ENCODE measurements at regions of chr14 and their contacts with region 1.

Region 1: DNA sequence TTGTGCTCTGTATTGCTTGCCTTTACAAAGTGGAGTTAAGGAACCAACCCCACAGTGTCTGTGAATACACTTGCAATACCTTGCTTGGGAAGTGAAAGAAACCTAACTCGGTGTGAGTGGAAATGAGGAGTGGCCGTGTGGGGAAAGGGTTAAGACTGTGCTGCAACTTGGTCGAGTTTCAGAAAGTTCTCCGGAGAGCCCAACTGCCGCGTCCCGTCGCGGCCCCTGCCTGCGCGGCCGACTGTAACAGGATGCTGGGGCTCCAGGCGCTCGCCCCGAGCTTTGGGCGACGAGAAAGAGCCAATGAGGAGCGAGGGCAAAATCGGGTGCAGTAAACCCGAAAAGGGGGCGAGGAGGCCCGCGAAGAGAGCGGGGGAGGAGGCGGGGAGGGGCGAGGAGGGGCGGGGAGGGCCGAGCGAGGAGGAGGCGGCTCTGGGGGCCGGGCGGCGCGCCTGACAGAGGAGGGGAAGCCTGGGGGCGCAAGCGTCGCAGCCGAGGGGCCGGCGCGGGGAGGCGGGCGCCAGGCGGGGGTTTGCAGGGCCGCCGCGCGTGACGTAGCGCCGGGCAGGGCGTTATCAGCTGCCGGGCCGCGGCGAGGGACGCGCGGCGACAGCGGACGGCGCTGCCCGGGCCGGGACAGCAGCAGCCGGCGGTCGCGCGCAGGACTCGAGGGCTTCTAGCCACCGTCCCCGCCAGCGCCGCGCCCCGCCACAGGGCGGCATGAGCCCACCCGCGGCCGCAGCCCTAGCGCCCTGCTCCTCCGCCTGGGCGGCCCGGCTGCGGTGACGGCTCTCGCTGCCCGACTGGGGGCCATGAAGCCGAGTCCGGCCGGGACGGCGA is at the start of gene DACT1:
- DNase-seq: peak in 1 of 2 experiments; percentile 78
- H3K4me3 ChIP-seq: peak within 1 kb of the TSS; percentile 56 to 73 (median 64)
- H3K27ac ChIP-seq: no peak within 1 kb of the TSS
- H3K4me1 ChIP-seq: peaks cover 4 to 21% (median 13%) of the 10 kb centered on the region in 4 experiments
- H3K27me3 ChIP-seq: peaks cover 8 to 35% (median 22%) of the 10 kb centered on the region in 4 experiments; a peak in 6 of 7 replicates
- CTCF ChIP-seq: 0 out of 4 replicates have a peak, but pooled peaks of 1 of the 3 experiments have one; percentile 2
- EP300 ChIP-seq: no peak
- POLR2A ChIP-seq: no peak; a peak in 1 of 3 replicates
- RAD21 ChIP-seq: 0 out of 4 replicates have a peak, but pooled peaks of 1 of the 2 experiments have one; percentile 2
- total RNA-seq, gene DACT1: 26.2 and 29.8 TPM in 2 replicates

Region 2: GRCh38 chr14:58513272-58513671 is 124.3 kb before region 1 on chr14:
- CTCF ChIA-PET with region 1: interaction called, 10 read pairs
- POLR2A ChIA-PET with region 1: no interaction called
- DNase-seq: no peak
- H3K4me3 ChIP-seq: no peak overlapping the region
- H3K27ac ChIP-seq: no peak overlapping the region
- H3K4me1 ChIP-seq: no peaks in the 10 kb centered on the region
- H3K27me3 ChIP-seq: no peaks in the 10 kb centered on the region
- CTCF ChIP-seq: no peak
- EP300 ChIP-seq: no peak
- POLR2A ChIP-seq: no peak
- RAD21 ChIP-seq: no peak

Region 3: GRCh38 chr14:58626431-58626831 is 11.2 kb before region 1 on chr14:
- CTCF ChIA-PET with region 1: interaction called, 26 read pairs
- POLR2A ChIA-PET with region 1: interaction called, 38 read pairs
- DNase-seq: no peak
- H3K4me3 ChIP-seq: no peak overlapping the region
- H3K27ac ChIP-seq: no peak overlapping the region
- H3K4me1 ChIP-seq: peaks cover 3 to 17% (median 17%) of the 10 kb centered on the region in 4 experiments
- H3K27me3 ChIP-seq: peaks cover 0 to 4% (median 3%) of the 10 kb centered on the region in 4 experiments; a peak in 3 of 7 replicates
- CTCF ChIP-seq: no peak
- EP300 ChIP-seq: no peak
- POLR2A ChIP-seq: no peak
- RAD21 ChIP-seq: no peak

Region 4: GRCh38 chr14:58668848-58669480 is 31.4 kb after region 1 on chr14:
- CTCF ChIA-PET with region 1: interaction called, 12 read pairs
- POLR2A ChIA-PET with region 1: no interaction called
- DNase-seq: no peak
- H3K4me3 ChIP-seq: no peak overlapping the region
- H3K27ac ChIP-seq: no peak overlapping the region
- H3K4me1 ChIP-seq: no peaks in the 10 kb centered on the region; a peak in 1 of 7 replicates
- H3K27me3 ChIP-seq: no peaks in the 10 kb centered on the region
- CTCF ChIP-seq: no peak
- EP300 ChIP-seq: no peak
- POLR2A ChIP-seq: no peak
- RAD21 ChIP-seq: no peak

Region 5: GRCh38 chr14:58717813-58718212 is 80.2 kb after region 1 on chr14:
- CTCF ChIA-PET with region 1: no interaction called
- POLR2A ChIA-PET with region 1: no interaction called
- DNase-seq: no peak
- H3K4me3 ChIP-seq: no peak overlapping the region
- H3K27ac ChIP-seq: no peak overlapping the region
- H3K4me1 ChIP-seq: no peaks in the 10 kb centered on the region
- H3K27me3 ChIP-seq: no peaks in the 10 kb centered on the region
- CTCF ChIP-seq: no peak
- EP300 ChIP-seq: no peak
- POLR2A ChIP-seq: no peak
- RAD21 ChIP-seq: no peak

Region 6: DNA sequence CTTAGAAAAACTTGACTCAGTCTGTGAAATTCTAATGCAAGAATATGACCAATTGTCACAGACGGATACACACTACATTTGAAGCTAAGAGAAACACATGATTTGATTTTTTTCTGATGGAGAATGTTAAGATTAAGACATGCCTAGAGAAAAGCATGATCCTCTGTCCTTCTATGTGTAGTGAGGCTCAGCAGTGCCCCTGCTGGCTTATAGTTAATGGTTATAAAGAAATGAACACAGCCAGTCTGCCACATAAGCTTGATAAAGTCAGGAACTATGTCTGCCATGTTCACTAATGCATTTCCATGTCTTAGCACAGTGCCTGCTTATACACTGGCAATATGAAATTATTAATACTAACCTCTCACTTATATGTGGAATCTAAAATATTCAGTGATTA is 382.8 kb after region 1 on chr14:
- CTCF ChIA-PET with region 1: interaction called, 84 read pairs
- POLR2A ChIA-PET with region 1: no interaction called
- DNase-seq: no peak
- H3K4me3 ChIP-seq: no peak overlapping the region
- H3K27ac ChIP-seq: no peak overlapping the region
- H3K4me1 ChIP-seq: peaks cover 0 to 3% (median 1%) of the 10 kb centered on the region in 4 experiments; a peak in 1 of 7 replicates
- H3K27me3 ChIP-seq: no peaks in the 10 kb centered on the region
- CTCF ChIP-seq: peak in 2 of 3 experiments; percentile 32 to 54; a peak in 2 of 4 replicates
- EP300 ChIP-seq: no peak
- POLR2A ChIP-seq: no peak
- RAD21 ChIP-seq: peak; percentile 42 to 50; a peak in 3 of 4 replicates